ENCODE measurements at regions of chr14 and their contacts with region 1.

Region 1: DNA sequence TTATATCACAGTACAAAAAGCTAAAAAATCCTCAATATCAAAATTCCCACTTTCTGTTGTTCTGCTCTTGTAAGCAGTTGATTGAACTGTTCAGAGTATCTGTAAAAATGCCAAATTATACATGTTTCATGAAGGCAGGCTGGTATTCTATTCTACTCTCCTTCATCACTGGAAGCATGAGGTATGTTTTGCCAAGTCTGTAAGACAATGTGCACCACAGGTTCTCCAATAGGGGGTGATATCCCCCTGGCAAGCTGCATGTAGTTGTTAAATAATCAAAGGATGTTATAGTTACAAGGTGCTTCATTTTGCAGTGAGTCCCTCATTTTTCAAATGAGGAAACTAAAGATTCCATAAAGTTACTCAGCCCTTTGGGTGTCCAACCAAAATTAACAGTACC is 15.1 kb upstream of the NEK9 start:
- DNase-seq: no peak
- H3K4me3 ChIP-seq: no peak overlapping the region
- CTCF ChIP-seq: peak; percentile 63

Region 2: DNA sequence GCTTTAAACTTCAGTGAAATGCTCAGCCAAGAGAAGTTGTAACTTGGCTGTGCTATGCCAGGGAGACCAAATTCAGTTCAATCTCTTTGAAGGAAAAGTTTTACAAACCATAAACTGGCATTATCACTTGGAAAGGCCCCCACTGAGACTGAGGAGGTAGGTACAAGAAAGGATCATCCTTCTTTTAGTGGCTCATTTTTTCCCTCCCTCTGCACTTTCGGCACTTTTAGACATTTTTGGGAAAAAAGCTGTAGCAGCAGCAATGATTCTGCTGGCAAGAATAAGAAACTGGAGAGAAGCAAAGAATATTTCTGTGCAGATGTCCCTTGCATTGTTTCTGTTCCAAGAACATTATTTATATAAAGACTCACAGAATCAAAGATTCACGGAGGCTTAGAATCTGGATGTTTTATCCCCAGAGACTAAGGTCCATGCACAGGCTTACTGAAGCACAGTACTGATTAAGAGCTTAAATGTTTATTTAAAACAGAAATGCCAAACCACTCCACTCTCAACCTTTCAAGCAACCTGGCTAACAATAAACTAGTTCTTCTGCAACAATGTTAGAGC is 60.2 kb before region 1 on chr14:
- in situ Hi-C with region 1: no loop called
- DNase-seq: no peak
- H3K4me3 ChIP-seq: no peak overlapping the region
- CTCF ChIP-seq: no peak

Region 3: DNA sequence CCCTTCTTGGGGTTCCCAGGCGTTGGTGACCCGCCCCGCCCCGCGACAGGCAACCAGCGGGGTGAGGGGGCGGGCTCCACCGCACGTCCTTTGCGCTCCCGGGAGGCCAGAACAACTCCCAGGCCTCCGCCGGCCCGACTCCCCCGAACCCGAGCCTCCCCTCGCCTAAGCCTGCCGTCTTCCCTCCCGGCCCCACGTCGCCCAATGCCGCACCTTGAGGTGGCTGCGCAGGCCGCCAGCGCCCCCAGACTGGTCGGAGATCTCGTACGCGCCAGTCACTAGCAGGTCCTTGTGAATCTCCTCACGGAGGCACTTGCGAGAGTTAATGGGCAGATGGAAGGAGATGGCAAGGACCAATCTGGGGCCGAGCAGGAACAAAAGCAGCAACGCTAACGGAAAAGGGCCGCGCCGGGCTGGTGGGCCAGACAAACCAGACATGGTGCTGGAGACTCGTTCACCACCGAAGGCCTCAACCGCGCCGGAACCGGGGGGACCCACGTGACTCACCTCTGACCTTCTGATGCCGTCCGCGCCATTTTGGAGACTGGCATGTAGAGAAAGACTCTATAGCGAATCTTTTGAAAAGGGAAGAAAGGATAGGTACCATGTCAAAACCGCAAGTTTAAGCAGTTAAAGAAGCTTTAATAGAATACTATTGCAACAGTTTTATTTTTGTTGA is 34.3 kb after region 1 on chr14 and contains the start of gene TMED10:
- in situ Hi-C with region 1: loop called (anchors 5 kb)
- DNase-seq: peak; percentile 75
- H3K4me3 ChIP-seq: peak within 1 kb of the TSS; percentile 88
- CTCF ChIP-seq: no peak

Region 4: DNA sequence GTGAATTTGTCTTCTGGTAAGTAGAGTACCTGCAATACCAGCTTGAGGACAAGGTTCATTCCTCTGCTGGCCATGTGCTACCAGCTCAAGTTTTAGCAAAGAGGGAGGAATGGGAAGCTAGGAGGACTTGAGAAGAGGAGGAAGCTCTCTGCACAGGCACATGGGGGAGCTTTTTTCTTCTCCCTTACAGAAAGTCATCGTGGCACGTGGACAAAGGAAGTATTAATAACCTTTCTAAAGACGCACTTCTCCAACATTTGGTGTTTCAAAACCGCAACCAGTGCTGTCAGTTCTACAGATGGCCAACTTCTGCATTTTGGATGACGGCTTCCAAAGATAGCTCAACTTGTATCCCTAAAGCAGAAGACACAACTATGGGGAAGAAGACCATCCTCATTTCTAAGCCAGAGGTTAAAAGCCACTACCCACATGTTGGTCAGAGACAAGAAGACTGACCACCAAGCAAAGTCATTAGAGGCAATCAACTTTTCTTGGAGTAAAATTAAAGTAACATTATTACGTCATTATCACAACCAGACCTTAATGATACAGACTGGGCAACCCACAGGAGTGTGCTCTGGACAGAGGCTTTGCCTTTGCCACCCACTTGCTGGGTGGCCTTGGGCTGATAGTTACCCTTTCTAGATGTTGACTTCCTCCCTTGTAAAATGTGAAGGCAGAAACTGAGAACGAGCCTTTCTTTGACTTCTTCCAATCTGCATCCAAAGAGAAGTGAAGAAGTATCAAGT is 46.7 kb after region 1 on chr14:
- in situ Hi-C with region 1: no loop called
- DNase-seq: no peak
- H3K4me3 ChIP-seq: no peak overlapping the region
- CTCF ChIP-seq: no peak

Region 5: GRCh38 chr14:75307700-75308379 is 165.9 kb after region 1 on chr14:
- in situ Hi-C with region 1: loop called (anchors 5 kb)
- DNase-seq: peak; percentile 74
- H3K4me3 ChIP-seq: no peak overlapping the region
- CTCF ChIP-seq: peak; percentile 91

Measured in astrocyte of the cerebellum (primary cell).